Heart right ventricle (tissue), 16 donors: ENCODE measurements at regions of chr1 and their contacts with region 1.

Region 1: GRCh38 chr1:157948312-157949073 is 45.0 kb upstream of the KIRREL1 start:
- DNase-seq: peak in 1 of 2 donors; percentile 23
- ATAC-seq: peak; percentile 58 to 90 (median 81)
- H3K4me3 ChIP-seq: no peak overlapping the region
- H3K27ac ChIP-seq: no peak overlapping the region
- H3K4me1 ChIP-seq: peaks cover 0 to 16% (median 0%) of the 10 kb centered on the region in 9 donors
- H3K27me3 ChIP-seq: peaks cover 0 to 21% (median 10%) of the 10 kb centered on the region in 7 donors
- CTCF ChIP-seq: peak; percentile 15 to 76 (median 64)

Region 2: DNA sequence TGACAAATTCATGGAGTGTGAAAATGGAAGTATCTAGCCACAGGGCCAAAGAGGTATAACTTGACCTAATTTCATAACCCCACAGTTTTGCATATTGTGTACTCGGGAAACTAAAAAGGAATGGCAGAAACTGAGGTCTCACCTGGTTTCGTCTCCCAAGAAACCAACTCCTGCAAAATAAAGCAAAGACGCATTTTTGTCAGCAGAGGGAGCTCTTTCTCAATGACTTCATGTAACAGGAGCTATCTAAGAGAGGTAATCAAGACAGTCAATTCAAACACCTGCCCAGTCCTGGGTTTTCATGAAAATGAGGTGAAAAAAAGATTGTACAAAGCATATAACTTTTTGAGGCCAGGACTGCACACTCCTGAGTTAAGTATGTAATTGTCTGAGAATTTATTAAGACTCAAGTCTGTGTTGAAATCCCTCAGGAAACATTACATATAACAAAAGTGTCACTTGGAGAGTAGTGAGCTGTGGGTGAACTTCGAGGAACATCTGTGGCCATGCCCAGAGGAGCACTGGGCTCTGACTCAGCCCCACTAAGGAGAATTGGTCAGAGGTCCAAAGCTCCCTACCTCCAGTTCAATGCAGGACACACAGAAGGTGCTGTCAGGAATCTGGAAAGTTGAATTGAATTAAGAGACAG is 368.2 kb before region 1 on chr1:
- intact Hi-C with region 1: loop called in 8 of 10 experiments (anchors 2 to 10 kb)
- DNase-seq: peak in 1 of 2 donors; percentile 32
- ATAC-seq: no peak
- H3K4me3 ChIP-seq: no peak overlapping the region
- H3K27ac ChIP-seq: no peak overlapping the region
- H3K4me1 ChIP-seq: no peaks in the 10 kb centered on the region
- H3K27me3 ChIP-seq: peaks cover 0 to 37% (median 24%) of the 10 kb centered on the region in 7 donors
- CTCF ChIP-seq: peak; percentile 44 to 80 (median 69)

Region 3: DNA sequence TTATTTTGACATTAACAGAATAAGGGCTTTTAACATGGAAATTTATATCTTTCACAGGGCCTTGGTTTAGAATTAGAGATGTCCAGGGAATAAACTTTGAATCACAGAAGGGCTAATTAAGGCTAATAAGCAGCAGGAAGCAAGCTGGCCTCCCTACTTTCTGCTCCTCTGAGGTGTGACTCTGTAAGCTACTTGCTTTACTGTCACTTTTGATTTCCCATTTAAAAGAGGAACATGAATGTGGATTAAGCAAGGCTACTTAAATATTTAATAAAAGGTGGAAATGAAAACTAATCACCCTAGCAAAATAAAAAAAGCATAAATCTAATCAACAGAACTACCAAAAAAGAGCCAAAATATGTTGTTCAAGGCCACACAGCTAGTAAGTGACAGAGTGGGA is 78.0 kb before region 1 on chr1:
- intact Hi-C with region 1: loop called in 4 of 10 experiments (anchors 5 kb)
- DNase-seq: no peak
- ATAC-seq: no peak
- H3K4me3 ChIP-seq: no peak overlapping the region
- H3K27ac ChIP-seq: no peak overlapping the region
- H3K4me1 ChIP-seq: no peaks in the 10 kb centered on the region
- H3K27me3 ChIP-seq: peaks cover 0 to 22% (median 0%) of the 10 kb centered on the region in 7 donors
- CTCF ChIP-seq: no peak

Region 4: DNA sequence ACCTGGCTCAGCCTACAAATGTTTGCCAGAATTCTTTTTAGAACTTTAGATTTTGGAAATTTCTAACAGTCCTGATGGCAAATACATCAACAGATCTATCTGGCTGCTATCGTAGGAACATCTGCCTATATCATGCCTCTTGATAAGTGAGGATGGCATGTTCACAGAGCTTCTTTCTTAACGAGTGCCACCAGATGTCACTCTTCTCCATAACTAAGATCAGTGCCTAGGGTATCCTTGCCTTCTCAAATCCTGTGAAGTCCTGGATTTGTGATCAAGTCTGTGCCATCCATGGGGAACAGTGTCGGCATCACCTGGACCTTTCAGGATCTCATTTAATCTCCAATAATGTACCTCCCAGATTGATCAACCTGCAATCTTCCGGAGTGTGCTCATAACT is 70.4 kb before region 1 on chr1:
- intact Hi-C with region 1: loop called (anchors 1 to 5 kb)
- DNase-seq: no peak
- ATAC-seq: peak in 5 of 8 donors; percentile 38 to 80 (median 64)
- H3K4me3 ChIP-seq: no peak overlapping the region
- H3K27ac ChIP-seq: no peak overlapping the region
- H3K4me1 ChIP-seq: peaks cover 0 to 12% (median 0%) of the 10 kb centered on the region in 9 donors
- H3K27me3 ChIP-seq: peaks cover 0 to 5% (median 0%) of the 10 kb centered on the region in 7 donors
- CTCF ChIP-seq: peak in 7 of 9 donors; percentile 27 to 65 (median 52)

Region 5: GRCh38 chr1:158564608-158565007 is 616.1 kb after region 1 on chr1:
- intact Hi-C with region 1: no loop called
- DNase-seq: no peak
- ATAC-seq: no peak
- H3K4me3 ChIP-seq: no peak overlapping the region
- H3K27ac ChIP-seq: no peak overlapping the region
- H3K4me1 ChIP-seq: peaks cover 0 to 8% (median 0%) of the 10 kb centered on the region in 9 donors
- H3K27me3 ChIP-seq: no peaks in the 10 kb centered on the region
- CTCF ChIP-seq: no peak